AG04450 (cell line): ENCODE measurements at regions of chr4 and their contacts with region 1.

Region 1: GRCh38 chr4:54322818-54323417 is 93.8 kb downstream of the PDGFRA start:
- DNase-seq: peak; percentile 16
- H3K4me3 ChIP-seq: no peak overlapping the region
- H3K27ac ChIP-seq: no peak overlapping the region
- H3K27me3 ChIP-seq: peaks cover 6% of the 10 kb centered on the region
- CTCF ChIP-seq: peak; percentile 84

Region 2: GRCh38 chr4:54433686-54434085 is 110.8 kb after region 1 on chr4:
- CTCF ChIA-PET with region 1: interaction called, 125 read pairs
- POLR2A ChIA-PET with region 1: no interaction called
- DNase-seq: no peak
- H3K4me3 ChIP-seq: no peak overlapping the region
- H3K27ac ChIP-seq: no peak overlapping the region
- H3K27me3 ChIP-seq: no peaks in the 10 kb centered on the region
- CTCF ChIP-seq: peak; percentile 65

Region 3: DNA sequence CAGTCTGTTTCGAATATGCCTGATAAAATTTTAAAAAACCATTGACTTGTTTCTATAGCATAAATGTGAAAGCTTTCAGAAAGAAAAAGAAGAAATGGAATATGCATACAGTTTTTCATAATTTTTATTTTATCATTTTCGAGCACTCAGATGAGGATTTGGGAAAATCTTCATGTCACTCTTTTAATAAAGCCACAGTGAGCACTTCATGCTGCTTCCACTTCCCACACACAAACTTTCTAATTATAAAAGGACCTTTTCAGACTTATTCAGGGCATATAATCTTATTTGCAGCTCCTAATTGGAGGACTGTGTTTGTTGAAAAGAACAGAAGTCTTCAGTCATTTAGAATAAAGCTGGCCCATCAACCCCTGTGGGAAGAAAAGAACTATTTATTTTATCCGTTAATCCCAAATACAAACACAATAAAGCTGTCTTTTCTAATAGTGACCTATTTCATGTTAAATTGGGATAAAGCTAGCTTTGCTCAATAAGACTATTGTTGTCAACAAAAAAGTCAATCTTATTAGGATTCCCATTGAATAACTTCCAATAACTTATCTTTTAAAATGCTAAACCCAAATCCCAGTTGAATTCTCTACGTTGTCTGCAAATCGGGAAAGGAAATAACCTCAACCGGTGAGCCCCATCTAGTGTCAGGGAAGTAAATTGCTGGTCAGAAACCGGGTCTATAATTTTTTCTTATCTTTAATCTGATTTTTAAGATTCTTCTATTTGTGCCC is 117.6 kb after region 1 on chr4:
- CTCF ChIA-PET with region 1: interaction called, 125 read pairs
- POLR2A ChIA-PET with region 1: no interaction called
- DNase-seq: no peak
- H3K4me3 ChIP-seq: no peak overlapping the region
- H3K27ac ChIP-seq: no peak overlapping the region
- H3K27me3 ChIP-seq: no peaks in the 10 kb centered on the region
- CTCF ChIP-seq: peak; percentile 71

Region 4: GRCh38 chr4:54516556-54517215 is 193.8 kb after region 1 on chr4:
- CTCF ChIA-PET with region 1: no interaction called
- POLR2A ChIA-PET with region 1: no interaction called
- DNase-seq: no peak
- H3K4me3 ChIP-seq: no peak overlapping the region
- H3K27ac ChIP-seq: no peak overlapping the region
- H3K27me3 ChIP-seq: no peaks in the 10 kb centered on the region
- CTCF ChIP-seq: no peak

Region 5: GRCh38 chr4:54961357-54961975 is 638.5 kb after region 1 on chr4:
- CTCF ChIA-PET with region 1: interaction called, 10 read pairs
- POLR2A ChIA-PET with region 1: no interaction called
- DNase-seq: no peak
- H3K4me3 ChIP-seq: no peak overlapping the region
- H3K27ac ChIP-seq: no peak overlapping the region
- H3K27me3 ChIP-seq: no peaks in the 10 kb centered on the region
- CTCF ChIP-seq: peak; percentile 58